ENCODE measurements at regions of chr12 and their contacts with region 1.

Region 1: DNA sequence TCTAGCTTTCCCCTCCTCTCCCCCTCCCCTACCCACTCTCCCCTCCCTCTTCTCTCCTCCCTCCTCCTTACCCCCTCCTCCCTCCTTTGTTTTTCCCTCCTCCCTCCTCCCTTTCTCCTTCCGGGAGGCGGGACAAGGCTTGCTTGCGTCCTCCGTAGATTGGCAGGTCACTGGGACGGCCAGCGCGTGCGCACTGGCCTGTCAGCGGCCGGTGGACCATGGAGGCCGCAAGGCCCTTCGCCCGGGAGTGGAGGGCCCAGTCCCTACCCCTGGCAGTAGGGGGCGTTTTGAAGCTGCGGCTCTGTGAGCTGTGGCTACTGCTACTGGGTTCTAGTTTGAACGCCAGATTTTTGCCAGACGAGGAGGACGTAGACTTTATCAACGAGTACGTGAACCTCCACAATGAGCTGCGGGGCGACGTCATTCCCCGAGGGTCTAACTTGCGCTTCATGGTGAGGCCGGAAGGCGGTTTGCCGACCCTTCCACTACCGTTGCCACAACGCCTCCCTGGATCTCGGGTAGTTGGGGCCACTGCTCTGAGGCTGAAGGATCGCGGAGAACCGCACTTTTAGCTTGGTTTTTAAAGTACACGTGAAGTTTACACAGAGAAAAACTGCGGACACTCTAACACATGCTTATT is at the start of gene GLIPR1L2:
- DNase-seq: peak; percentile 89 to 90
- H3K4me3 ChIP-seq: peak within 1 kb of the TSS; percentile 52
- H3K4me3 Mint-ChIP-seq: peak within 1 kb of the TSS; percentile 77
- H3K27ac Mint-ChIP-seq: peak within 1 kb of the TSS; percentile 35
- H3K4me1 ChIP-seq: no peaks in the 10 kb centered on the region
- H3K4me1 Mint-ChIP-seq: no peaks in the 10 kb centered on the region
- H3K27me3 ChIP-seq: no peaks in the 10 kb centered on the region
- H3K27me3 Mint-ChIP-seq: peaks cover 8% of the 10 kb centered on the region
- CTCF ChIP-seq: peak; percentile 72 to 77
- total RNA-seq, gene GLIPR1L2: not detected in 2 replicates

Region 2: GRCh38 chr12:75511116-75512048 is 120.4 kb after region 1 on chr12 and contains the start of gene KRR1:
- CTCF ChIA-PET with region 1: interaction called, 3 read pairs
- POLR2A ChIA-PET with region 1: no interaction called
- intact Hi-C with region 1: loop called (anchors 2 kb)
- DNase-seq: peak; percentile 92 to 96
- H3K4me3 ChIP-seq: peak within 1 kb of the TSS; percentile 77
- H3K4me3 Mint-ChIP-seq: peak within 1 kb of the TSS; percentile 100
- H3K27ac Mint-ChIP-seq: peak within 1 kb of the TSS; percentile 99
- H3K4me1 ChIP-seq: 0 out of 2 replicates have a peak, but pooled peaks cover 10% of the 10 kb centered on the region
- H3K4me1 Mint-ChIP-seq: no peaks in the 10 kb centered on the region
- H3K27me3 ChIP-seq: no peaks in the 10 kb centered on the region
- H3K27me3 Mint-ChIP-seq: no peaks in the 10 kb centered on the region
- CTCF ChIP-seq: no peak
- total RNA-seq, gene KRR1: 73.0 and 73.2 TPM in 2 replicates

Region 3: DNA sequence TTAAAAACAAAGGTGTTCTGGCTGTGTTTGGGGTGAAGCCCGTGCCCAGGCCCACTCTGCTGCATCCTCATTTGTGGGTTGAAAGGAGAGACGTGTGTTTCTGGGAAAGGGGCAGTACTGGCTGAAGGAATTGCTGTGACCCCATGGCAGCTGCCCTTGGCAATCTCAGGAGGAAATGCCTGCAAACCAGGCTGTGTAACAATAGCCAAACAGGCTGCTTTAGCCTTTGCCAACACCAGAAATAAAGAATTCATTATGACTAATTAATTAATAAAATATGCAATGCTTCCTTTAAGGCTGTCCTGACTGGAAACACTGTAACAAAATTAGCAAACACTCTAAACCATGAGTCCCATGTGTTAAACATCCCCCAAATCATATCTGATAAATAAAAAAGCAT is 173.4 kb after region 1 on chr12:
- CTCF ChIA-PET with region 1: no interaction called
- POLR2A ChIA-PET with region 1: no interaction called
- intact Hi-C with region 1: no loop called
- DNase-seq: no peak
- H3K4me3 ChIP-seq: no peak overlapping the region
- H3K4me3 Mint-ChIP-seq: no peak overlapping the region
- H3K27ac Mint-ChIP-seq: no peak overlapping the region
- H3K4me1 ChIP-seq: no peaks in the 10 kb centered on the region
- H3K4me1 Mint-ChIP-seq: no peaks in the 10 kb centered on the region
- H3K27me3 ChIP-seq: no peaks in the 10 kb centered on the region
- H3K27me3 Mint-ChIP-seq: no peaks in the 10 kb centered on the region
- CTCF ChIP-seq: no peak

Measured in Caco-2 (cell line).